Mammary epithelial cell (primary cell): ENCODE measurements at regions of chr10 and their contacts with region 1.

Region 1: GRCh38 chr10:27504007-27504807 is at the start of gene RAB18:
- DNase-seq: peak; percentile 97
- H3K4me3 ChIP-seq: peak within 1 kb of the TSS; percentile 70 to 96 (median 94)
- H3K27ac ChIP-seq: peak within 1 kb of the TSS; percentile 92
- H3K4me1 ChIP-seq: peaks cover 28% of the 10 kb centered on the region
- H3K27me3 ChIP-seq: no peaks in the 10 kb centered on the region
- CTCF ChIP-seq: peak in 1 of 2 donors; percentile 13
- total RNA-seq, gene RAB18: 75.3 to 164 TPM

Region 2: DNA sequence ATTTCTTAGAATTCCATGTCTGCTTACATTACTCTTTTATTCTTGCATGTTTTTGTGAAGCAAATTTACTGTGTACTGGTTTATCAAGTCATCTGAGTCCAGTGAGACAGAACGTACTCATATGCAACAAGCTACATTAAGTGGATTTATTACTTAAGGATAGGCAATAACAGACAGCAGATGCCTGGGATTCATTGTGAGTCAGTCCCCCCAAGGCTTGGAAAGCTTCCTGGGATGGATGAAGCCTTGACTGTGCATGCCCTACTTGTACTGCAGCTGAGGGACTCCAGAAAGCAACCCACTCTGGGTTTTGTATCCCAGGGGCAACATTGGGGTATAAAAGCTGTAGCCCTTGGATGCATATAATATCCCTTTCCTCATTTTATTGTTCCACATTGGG is 113.5 kb before region 1 on chr10:
- CTCF ChIA-PET with region 1: no interaction called
- dilution Hi-C with region 1: no loop called
- in situ Hi-C with region 1: no loop called
- intact Hi-C with region 1: loop called (anchors 5 kb)
- DNase-seq: peak; percentile 90
- H3K4me3 ChIP-seq: no peak overlapping the region
- H3K27ac ChIP-seq: peak overlapping the region; percentile 4
- H3K4me1 ChIP-seq: peaks cover 29% of the 10 kb centered on the region
- H3K27me3 ChIP-seq: no peaks in the 10 kb centered on the region
- CTCF ChIP-seq: no peak

Region 3: GRCh38 chr10:27482984-27483956 is 20.9 kb before region 1 on chr10:
- CTCF ChIA-PET with region 1: interaction called, 5 read pairs
- dilution Hi-C with region 1: no loop called
- in situ Hi-C with region 1: no loop called
- intact Hi-C with region 1: loop called (anchors 1 kb)
- DNase-seq: peak; percentile 91
- H3K4me3 ChIP-seq: peak overlapping the region; percentile 16 to 36 (median 36)
- H3K27ac ChIP-seq: peak overlapping the region; percentile 98
- H3K4me1 ChIP-seq: peaks cover 43% of the 10 kb centered on the region
- H3K27me3 ChIP-seq: no peaks in the 10 kb centered on the region
- CTCF ChIP-seq: no peak

Region 4: DNA sequence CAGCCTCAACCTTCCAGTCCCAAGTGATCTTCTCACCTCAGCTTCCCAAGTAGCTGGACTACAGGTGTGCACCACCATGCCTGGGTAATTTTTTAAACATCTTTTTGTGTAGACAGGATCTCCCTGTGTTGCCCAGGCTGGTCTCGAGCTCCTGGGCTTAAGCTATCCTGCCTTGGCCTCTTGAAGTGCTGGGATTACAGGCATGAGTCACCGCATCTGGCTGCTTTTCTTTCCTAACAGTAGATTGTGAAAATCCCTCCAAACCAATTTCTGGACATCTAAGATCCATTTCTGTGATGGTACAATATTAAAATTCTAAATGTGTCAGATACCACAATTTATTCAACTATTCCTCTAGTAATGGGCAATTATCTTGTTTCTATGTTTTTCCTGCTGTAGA is 38.6 kb after region 1 on chr10:
- CTCF ChIA-PET with region 1: no interaction called
- dilution Hi-C with region 1: no loop called
- in situ Hi-C with region 1: no loop called
- intact Hi-C with region 1: no loop called
- DNase-seq: peak; percentile 6
- H3K4me3 ChIP-seq: no peak overlapping the region
- H3K27ac ChIP-seq: no peak overlapping the region
- H3K4me1 ChIP-seq: peaks cover 11% of the 10 kb centered on the region
- H3K27me3 ChIP-seq: no peaks in the 10 kb centered on the region
- CTCF ChIP-seq: no peak